ENCODE measurements at regions of chr9 and their contacts with region 1.

Region 1: DNA sequence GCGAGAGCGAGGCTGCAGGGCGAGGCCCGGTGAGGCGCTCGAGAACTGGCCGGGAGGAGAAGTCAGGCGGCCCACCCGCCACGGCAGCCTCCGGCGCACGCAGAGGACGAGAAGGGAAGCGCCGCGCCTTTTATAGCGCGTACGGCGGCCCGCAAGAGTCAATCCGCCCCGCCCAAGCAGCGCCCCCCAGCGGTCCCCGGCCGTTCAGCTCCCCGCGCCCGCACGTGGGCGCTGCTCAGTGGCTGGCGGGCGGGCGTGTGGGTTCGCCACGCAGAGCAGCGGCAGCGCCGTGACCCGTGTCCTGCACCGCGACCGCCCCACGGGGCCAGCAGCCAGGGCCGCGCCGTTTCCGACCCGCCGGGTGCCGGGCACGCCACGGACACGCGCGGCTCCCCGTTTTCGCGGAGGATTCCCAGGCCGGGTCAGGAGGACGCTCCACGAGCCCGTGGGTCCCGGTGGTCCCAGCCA is 14.6 kb downstream of the LCN10 start:
- DNase-seq: peak; percentile 78
- H3K4me3 ChIP-seq: peak overlapping the region; percentile 76
- H3K27ac ChIP-seq: no peak overlapping the region
- H3K27me3 ChIP-seq: no peaks in the 10 kb centered on the region
- CTCF ChIP-seq: peak; percentile 79

Region 2: DNA sequence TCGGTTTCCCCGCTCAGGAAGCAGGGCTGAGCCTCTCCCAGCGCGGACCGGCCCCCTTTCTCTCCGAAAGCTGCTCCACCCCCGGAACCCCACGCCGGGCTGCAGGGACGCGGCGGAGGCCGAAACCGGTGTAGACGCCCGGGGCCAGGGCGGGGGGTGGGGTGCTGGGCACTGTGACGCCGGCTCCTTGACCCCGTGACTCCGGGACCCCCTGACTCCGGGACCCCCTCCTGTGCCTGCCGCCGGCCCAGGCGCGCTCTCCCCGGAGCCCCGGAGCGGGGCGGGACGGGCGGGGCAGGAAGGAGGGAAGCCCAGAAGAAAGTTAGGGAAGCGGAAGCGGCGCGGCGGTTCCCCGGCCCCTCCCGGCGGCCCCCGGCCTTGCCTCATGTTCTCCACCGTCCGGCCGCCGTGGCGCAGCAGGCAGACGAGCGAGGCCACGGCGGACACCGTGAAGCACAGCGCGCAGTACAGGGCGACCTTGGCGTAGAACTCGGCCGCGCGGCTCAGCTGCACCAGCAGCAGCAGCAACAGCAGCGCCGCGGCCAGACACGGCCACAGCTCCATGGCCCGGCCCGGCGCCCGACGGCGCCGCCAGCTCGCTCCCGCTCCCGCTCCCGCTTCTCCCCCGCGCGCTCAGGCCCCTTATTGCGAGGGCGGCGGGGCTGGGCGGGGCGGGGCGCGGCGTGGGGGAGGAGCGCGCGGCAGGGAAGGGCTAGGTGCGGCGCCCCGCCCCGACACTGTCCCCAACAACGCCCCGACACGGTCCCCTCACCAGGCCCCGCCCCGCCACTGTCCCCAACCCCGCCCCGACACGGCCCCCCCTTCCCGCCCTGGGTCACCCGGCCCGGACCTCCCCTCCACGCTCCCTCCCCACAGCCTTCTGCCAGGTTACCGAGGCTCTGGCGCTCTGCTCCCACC is 41.1 kb before region 1 on chr9 and contains the start of gene AGPAT2:
- CTCF ChIA-PET with region 1: no interaction called
- POLR2A ChIA-PET with region 1: interaction called, 17 read pairs
- DNase-seq: no peak
- H3K4me3 ChIP-seq: peak within 1 kb of the TSS; percentile 71
- H3K27ac ChIP-seq: no peak within 1 kb of the TSS
- H3K27me3 ChIP-seq: peaks cover 3% of the 10 kb centered on the region
- CTCF ChIP-seq: no peak
- polyA plus RNA-seq, gene AGPAT2: 24.4 and 30.0 TPM in 2 replicates

Region 3: GRCh38 chr9:136711751-136712689 is 16.1 kb before region 1 on chr9 and contains the start of gene DIPK1B:
- CTCF ChIA-PET with region 1: no interaction called
- POLR2A ChIA-PET with region 1: interaction called, 14 read pairs
- DNase-seq: no peak
- H3K4me3 ChIP-seq: peak within 1 kb of the TSS; percentile 44
- H3K27ac ChIP-seq: no peak within 1 kb of the TSS
- H3K27me3 ChIP-seq: peaks cover 16% of the 10 kb centered on the region
- CTCF ChIP-seq: no peak
- polyA plus RNA-seq, gene DIPK1B: 2.8 and 3.6 TPM in 2 replicates

Region 4: DNA sequence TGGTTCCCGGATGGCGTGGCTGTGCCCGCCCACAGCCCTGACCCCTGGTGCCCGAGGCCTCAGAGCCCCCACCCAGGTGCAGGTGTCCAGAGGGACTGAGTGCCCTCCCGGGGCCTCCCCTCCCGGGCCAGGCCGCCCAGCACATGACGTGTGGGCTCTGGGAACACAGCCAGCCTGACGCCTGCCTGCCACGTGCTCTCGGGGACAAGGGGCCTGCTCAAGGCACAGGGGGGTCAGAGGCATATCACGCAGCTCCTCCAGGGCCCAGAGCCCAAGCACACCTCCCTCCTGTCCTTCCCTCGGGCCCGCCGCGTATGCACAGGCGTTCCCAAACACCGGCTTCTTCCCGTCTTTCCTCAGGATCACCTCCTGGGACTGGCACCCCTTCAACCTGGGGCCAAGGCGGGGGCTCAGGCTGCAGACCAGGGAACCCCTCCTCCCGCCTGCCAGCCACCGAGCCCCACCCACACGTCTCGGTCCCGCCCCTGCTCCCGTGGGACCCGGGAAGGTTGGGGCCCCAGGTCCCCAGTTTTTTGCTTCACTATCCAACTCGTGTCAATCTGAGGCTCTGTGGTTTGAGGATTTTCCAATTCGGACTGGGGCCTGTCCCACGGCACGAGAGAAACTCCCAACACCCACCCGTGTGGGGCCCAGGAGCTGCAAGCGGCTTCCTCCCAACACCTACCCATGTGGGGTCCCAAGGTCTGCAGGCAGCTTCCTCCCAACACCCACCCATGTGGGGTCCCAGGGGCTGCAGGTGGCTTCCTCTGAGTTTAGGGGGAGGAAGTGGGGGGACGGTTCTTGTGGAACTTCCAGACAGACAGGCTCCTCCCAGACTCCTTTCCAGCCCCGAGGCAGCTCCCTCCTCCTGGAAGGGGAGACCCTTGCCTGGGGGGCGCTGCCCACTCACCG is 13.1 kb after region 1 on chr9:
- CTCF ChIA-PET with region 1: interaction called, 3 read pairs
- POLR2A ChIA-PET with region 1: interaction called, 10 read pairs
- DNase-seq: no peak
- H3K4me3 ChIP-seq: no peak overlapping the region
- H3K27ac ChIP-seq: no peak overlapping the region
- H3K27me3 ChIP-seq: peaks cover 53% of the 10 kb centered on the region
- CTCF ChIP-seq: no peak

Measured in AG04450 (cell line).